ENCODE measurements at regions of chr18 and their contacts with region 1.

Region 1: DNA sequence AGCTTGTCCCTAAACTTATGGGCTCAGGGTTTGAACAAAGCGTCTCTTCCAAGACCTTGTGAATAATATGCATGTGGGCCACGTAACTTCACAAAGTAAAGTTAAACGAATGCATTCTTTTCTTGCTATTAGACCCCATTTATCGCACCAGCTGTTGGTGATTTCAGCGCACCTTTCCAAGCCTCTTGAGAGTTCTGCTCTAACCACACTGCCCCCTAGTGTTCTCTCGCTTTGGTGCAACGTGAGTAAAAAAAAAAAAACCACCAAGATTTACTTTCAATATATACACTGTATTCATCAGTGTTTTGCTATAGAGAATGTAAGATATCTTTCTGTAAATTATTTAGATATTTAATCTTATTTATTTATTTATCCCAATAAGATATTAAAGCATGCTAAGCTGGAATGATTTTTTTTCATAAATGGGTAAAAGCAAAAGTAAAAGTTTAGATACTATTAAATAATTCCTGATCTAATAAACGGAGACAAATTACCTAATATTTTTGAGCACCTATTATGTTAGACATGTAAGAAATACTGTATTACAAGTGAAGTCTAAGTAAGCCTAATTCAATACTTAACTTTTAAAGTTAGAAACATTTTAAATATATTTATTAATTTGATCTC is 459.5 kb downstream of the DLGAP1 start:
- DNase-seq: peak; percentile 4 to 56 (median 25)
- H3K4me3 ChIP-seq: no peak overlapping the region
- H3K4me3 Mint-ChIP-seq: no peak overlapping the region
- H3K27ac ChIP-seq: no peak overlapping the region
- H3K27ac Mint-ChIP-seq: no peak overlapping the region
- H3K4me1 ChIP-seq: no peaks in the 10 kb centered on the region
- H3K4me1 Mint-ChIP-seq: peaks cover 0 to 3% (median 2%) of the 10 kb centered on the region in 3 donors
- H3K27me3 ChIP-seq: no peaks in the 10 kb centered on the region
- H3K27me3 Mint-ChIP-seq: peaks cover 0 to 2% of the 10 kb centered on the region in 2 donors

Region 2: DNA sequence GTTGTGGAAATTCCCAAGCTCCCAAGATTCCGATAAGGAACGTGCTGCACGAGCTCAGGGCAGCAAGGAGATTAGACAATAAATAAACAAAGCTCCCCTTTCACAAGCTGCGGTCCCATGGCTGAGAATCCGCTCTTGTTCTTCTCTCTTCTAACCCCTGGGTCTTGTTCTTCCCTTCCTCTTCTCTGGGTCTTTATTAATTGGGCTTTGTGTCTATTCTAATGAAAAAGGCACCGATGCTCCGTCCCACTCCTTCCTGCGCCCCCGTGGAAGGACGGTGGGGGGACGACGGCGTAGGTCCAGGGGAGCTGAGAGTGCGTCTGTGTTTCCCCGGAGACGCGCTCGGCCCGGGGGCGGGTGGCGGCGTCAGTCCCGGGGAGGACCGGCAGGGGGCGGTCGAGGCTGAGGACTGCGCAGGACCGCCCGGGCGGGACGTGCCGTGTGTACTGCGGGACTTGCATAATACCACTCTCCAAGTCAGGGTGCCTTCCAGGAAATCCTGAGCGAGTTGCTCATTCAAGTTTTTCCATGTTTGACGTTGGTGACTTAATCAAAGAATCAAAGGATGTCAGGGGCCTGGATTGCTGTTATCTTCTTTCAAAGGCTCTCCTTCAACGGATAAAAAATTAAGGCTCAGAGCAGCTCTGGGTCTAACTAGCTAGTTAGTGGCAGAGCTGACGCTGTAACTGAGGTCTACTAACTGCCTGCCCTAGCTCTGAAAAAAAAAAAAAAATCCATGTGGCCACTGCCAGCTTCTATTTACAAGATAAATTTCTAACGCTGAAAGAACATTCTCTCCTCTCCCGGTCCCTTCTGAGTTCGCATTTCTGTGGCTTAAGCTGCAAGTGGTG is 224.2 kb before region 1 on chr18:
- CTCF ChIA-PET with region 1: interaction called, 11 read pairs
- POLR2A ChIA-PET with region 1: no interaction called
- DNase-seq: peak; percentile 41 to 69 (median 51)
- H3K4me3 ChIP-seq: peak overlapping the region; percentile 21
- H3K4me3 Mint-ChIP-seq: peak overlapping the region in 6 of 7 donors; percentile 29 to 78 (median 58)
- H3K27ac ChIP-seq: no peak overlapping the region
- H3K27ac Mint-ChIP-seq: peak overlapping the region in 1 of 8 donors; percentile 59
- H3K4me1 ChIP-seq: peaks cover 5% of the 10 kb centered on the region
- H3K4me1 Mint-ChIP-seq: peaks cover 9 to 20% (median 16%) of the 10 kb centered on the region in 3 donors
- H3K27me3 ChIP-seq: no peaks in the 10 kb centered on the region
- H3K27me3 Mint-ChIP-seq: peaks cover 6 to 33% of the 10 kb centered on the region in 2 donors

Region 3: DNA sequence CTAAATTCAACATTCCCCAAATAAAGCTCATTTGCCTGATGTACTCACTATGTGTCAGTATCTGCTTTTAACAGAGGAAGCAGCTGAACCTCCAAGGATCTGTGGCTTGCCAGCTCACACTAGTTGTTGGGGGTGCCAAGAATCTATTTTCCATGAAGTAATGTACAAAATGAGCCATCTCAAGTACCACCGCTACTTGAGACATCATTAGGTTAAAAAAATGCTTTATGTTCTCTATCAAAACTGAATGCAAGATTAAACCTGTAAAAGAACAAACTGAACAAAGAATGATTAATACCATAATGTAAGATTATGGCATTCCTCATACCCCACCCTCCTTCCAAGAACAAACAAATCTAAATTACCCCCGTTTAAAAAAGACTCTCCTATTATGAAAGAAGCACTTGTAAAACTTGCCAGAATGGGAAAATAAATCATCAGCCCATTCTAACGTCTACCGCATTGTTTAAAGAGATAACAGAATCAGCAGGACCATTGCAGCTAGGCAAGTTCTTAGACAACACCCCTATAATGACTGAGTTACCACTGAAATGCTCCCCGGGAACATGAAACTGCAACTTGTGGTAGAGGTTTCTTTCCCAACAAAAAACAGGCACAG is 12.1 kb before region 1 on chr18:
- CTCF ChIA-PET with region 1: interaction called, 16 read pairs
- POLR2A ChIA-PET with region 1: no interaction called
- DNase-seq: no peak
- H3K4me3 ChIP-seq: no peak overlapping the region
- H3K4me3 Mint-ChIP-seq: no peak overlapping the region
- H3K27ac ChIP-seq: no peak overlapping the region
- H3K27ac Mint-ChIP-seq: peak overlapping the region in 1 of 8 donors; percentile 34
- H3K4me1 ChIP-seq: no peaks in the 10 kb centered on the region
- H3K4me1 Mint-ChIP-seq: peaks cover 13 to 26% (median 21%) of the 10 kb centered on the region in 3 donors
- H3K27me3 ChIP-seq: no peaks in the 10 kb centered on the region
- H3K27me3 Mint-ChIP-seq: peaks cover 3 to 9% of the 10 kb centered on the region in 2 donors

Measured in CD8-positive, alpha-beta memory T cell (primary cell).